Heart left ventricle (tissue), 16 donors: ENCODE measurements at regions of chr6 and their contacts with region 1.

Region 1: GRCh38 chr6:31729515-31729978 is 448 bp upstream of the DDAH2 start:
- DNase-seq: peak; percentile 93 to 95 (median 93)
- ATAC-seq: peak; percentile 89 to 91 (median 89)
- H3K4me3 ChIP-seq: peak overlapping the region; percentile 52 to 95 (median 76)
- H3K27ac ChIP-seq: peak overlapping the region; percentile 70 to 99 (median 97)
- H3K4me1 ChIP-seq: peaks cover 4 to 85% (median 33%) of the 10 kb centered on the region in 12 donors
- H3K27me3 ChIP-seq: no peaks in the 10 kb centered on the region
- CTCF ChIP-seq: peak in 7 of 12 donors; percentile 36 to 76 (median 54)
- POLR2A ChIP-seq: peak in 1 of 2 donors; percentile 57

Region 2: GRCh38 chr6:31702819-31703522 is 26.6 kb before region 1 on chr6 and contains the start of gene ABHD16A:
- intact Hi-C with region 1: loop called in 2 of 10 experiments (anchors 2 kb)
- DNase-seq: peak; percentile 99 to 100 (median 99)
- ATAC-seq: peak; percentile 96 to 99 (median 98)
- H3K4me3 ChIP-seq: peak within 1 kb of the TSS; percentile 58 to 99 (median 78)
- H3K27ac ChIP-seq: peak within 1 kb of the TSS; percentile 90 to 100 (median 98)
- H3K4me1 ChIP-seq: peaks cover 3 to 30% (median 21%) of the 10 kb centered on the region in 12 donors
- H3K27me3 ChIP-seq: no peaks in the 10 kb centered on the region
- CTCF ChIP-seq: peak in 2 of 12 donors; percentile 14 to 20
- POLR2A ChIP-seq: peak; percentile 88 to 98
- total RNA-seq, gene ABHD16A: 24.2 to 54.7 (median 27.4) TPM

Region 3: DNA sequence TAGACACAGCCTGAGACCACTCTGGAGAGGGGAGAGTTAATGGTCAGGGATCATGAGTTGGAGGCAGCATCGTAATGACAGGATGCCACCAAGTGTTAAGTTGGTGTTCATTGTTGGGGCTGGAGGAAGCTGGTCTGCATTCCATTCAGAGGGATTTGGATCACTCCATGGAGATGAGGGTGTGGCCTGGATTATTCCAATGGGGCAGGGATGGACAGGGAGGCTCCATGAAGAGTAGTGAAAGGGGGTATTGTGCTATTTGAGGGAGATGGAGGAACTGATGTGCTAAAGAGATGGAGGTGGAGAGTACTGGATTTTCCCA is 34.0 kb after region 1 on chr6:
- intact Hi-C with region 1: loop called in 4 of 10 experiments (anchors 5 kb)
- DNase-seq: peak in 1 of 5 donors; percentile 34
- ATAC-seq: peak in 3 of 4 donors; percentile 55 to 77 (median 57)
- H3K4me3 ChIP-seq: no peak overlapping the region
- H3K27ac ChIP-seq: peak overlapping the region in 1 of 12 donors; percentile 47
- H3K4me1 ChIP-seq: peaks cover 0 to 21% (median 6%) of the 10 kb centered on the region in 12 donors
- H3K27me3 ChIP-seq: no peaks in the 10 kb centered on the region
- CTCF ChIP-seq: peak in 1 of 12 donors; percentile 11
- POLR2A ChIP-seq: no peak

Region 4: DNA sequence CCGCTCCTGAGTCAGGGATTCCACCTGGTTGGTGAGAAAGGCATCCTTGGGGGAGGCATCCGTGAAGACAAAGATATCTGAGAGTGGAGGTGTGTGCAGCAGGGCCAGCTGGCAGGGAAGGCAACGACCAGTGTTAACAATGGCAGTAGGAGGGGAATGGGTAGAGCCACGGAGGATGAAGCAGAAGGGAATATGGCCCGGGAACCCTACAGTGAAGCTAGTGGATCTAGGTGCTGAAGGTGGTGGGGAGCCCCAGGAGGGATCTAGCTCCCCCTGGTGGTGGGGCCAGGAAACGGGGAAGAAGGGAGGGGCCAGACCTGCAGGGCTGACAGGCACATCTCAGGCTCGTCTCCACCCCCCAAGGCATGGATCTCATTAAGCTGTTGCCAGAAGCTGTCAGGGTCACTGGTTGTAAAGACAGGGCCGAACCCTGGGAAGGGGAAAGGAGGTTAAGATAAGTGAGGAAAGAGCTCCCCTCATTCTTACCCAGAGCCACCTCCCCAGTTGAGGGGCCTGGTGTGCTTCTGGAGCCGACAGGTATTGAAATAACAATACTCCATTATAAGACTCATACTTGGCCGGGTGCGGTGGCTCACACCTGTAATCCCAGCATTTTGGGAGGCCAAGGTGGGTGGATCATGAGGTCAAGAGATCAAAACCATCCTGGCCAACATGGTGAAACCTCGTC is 40.3 kb after region 1 on chr6:
- intact Hi-C with region 1: loop called in 3 of 10 experiments (anchors 5 kb)
- DNase-seq: peak; percentile 54 to 87 (median 67)
- ATAC-seq: peak in 3 of 4 donors; percentile 61 to 71 (median 67)
- H3K4me3 ChIP-seq: no peak overlapping the region
- H3K27ac ChIP-seq: no peak overlapping the region
- H3K4me1 ChIP-seq: peaks cover 0 to 41% (median 0%) of the 10 kb centered on the region in 12 donors
- H3K27me3 ChIP-seq: no peaks in the 10 kb centered on the region
- CTCF ChIP-seq: peak; percentile 56 to 86 (median 68)
- POLR2A ChIP-seq: no peak

Region 5: GRCh38 chr6:31814677-31815024 is 85.1 kb after region 1 on chr6:
- intact Hi-C with region 1: loop called in 1 of 10 experiments (anchors 5 kb)
- DNase-seq: peak; percentile 94 to 98 (median 97)
- ATAC-seq: peak; percentile 84 to 89 (median 87)
- H3K4me3 ChIP-seq: peak overlapping the region; percentile 22 to 76 (median 66)
- H3K27ac ChIP-seq: peak overlapping the region; percentile 91 to 100 (median 99)
- H3K4me1 ChIP-seq: peaks cover 0 to 39% (median 28%) of the 10 kb centered on the region in 12 donors
- H3K27me3 ChIP-seq: no peaks in the 10 kb centered on the region
- CTCF ChIP-seq: no peak
- POLR2A ChIP-seq: peak in 1 of 2 donors; percentile 61

Region 6: DNA sequence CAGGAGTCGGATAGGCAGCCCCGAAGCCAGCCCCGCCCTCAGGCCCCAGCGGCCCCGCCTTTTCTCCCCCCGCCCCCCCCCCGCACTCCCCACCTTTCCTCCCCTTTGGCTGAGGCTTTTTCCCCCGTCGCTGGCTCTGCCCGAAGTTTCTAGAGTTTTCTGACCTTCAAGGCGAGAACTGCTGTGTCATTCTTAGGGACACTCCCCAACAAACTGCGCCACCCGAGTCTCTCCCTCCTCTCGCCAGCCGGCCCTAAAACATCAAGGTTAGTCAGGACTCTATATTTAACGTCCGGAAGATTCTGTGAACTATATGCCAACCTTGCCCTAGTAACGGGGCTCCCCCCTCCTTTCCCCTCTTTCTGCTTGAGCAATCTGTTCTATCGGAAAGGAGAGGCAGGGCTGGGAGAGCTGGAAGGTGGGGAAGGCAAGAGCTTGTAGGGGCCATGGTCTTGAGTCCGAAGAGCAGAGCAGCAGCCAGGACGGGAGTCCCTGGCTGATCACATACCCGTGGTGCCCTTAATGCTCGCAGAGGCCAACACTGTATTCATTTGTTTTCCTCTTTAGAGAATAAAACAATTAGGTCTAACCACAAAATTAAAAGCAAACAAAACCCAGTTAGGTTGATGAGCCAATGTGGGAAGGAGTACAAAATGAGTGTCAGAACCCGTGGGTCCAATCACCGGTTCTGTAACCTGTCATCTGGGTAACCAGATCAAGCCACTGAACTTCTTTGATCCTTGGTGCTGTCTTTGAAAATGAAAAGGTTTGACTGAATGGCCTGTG is 92.7 kb after region 1 on chr6:
- intact Hi-C with region 1: loop called in 2 of 10 experiments (anchors 2 to 5 kb)
- DNase-seq: peak; percentile 82 to 93 (median 89)
- ATAC-seq: peak; percentile 58 to 82 (median 72)
- H3K4me3 ChIP-seq: peak overlapping the region; percentile 2 to 73 (median 62)
- H3K27ac ChIP-seq: peak overlapping the region; percentile 93 to 100 (median 99)
- H3K4me1 ChIP-seq: peaks cover 0 to 78% (median 52%) of the 10 kb centered on the region in 12 donors
- H3K27me3 ChIP-seq: no peaks in the 10 kb centered on the region
- CTCF ChIP-seq: no peak
- POLR2A ChIP-seq: peak in 1 of 2 donors; percentile 82

Region 7: GRCh38 chr6:31827286-31828079 is 97.9 kb after region 1 on chr6 and contains the start of gene HSPA1B:
- intact Hi-C with region 1: loop called in 6 of 10 experiments (anchors 2 to 10 kb)
- DNase-seq: peak; percentile 98 to 100 (median 99)
- ATAC-seq: peak; percentile 94 to 97 (median 96)
- H3K4me3 ChIP-seq: peak within 1 kb of the TSS; percentile 41 to 82 (median 73)
- H3K27ac ChIP-seq: peak within 1 kb of the TSS; percentile 89 to 98 (median 96)
- H3K4me1 ChIP-seq: peaks cover 0 to 52% (median 30%) of the 10 kb centered on the region in 12 donors
- H3K27me3 ChIP-seq: no peaks in the 10 kb centered on the region
- CTCF ChIP-seq: no peak
- POLR2A ChIP-seq: peak; percentile 100
- total RNA-seq, gene HSPA1B: 120 to 306 (median 146) TPM